Left ventricle myocardium inferior (tissue), 1 donor: ENCODE measurements at regions of chr10 and their contacts with region 1.

Region 1: DNA sequence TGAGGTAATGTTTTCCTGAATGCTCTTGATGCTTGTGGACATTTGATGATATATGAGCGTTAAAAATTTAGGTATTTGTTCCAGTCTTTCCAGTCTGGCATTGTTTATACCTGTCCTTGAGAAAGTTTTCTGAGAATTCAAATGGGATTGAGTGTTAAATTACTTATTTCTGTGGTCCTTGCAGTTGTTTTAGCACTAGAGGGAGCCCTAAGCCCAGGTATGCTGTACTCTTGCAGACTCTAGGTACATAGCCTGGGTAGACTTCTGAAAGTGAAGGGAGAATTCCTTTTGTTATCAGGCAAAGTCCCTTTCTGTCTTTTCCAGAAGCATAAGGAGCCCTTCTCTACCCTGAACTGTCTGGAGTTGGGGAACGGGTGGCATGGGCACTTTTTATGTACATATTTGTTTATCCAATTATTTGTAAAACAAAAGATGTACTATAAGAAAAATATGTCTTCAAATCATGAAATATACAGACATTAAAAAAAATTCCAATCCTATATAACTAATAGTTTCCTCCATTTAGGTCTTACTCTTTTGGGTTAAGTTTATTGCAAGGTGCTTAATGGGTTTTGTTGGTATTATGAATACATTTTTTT is 262.1 kb downstream of the ATRNL1 start:
- DNase-seq: no peak
- H3K4me3 ChIP-seq: no peak overlapping the region
- H3K27ac ChIP-seq: no peak overlapping the region
- H3K4me1 ChIP-seq: no peaks in the 10 kb centered on the region
- H3K27me3 ChIP-seq: no peaks in the 10 kb centered on the region
- CTCF ChIP-seq: peak; percentile 59

Region 2: GRCh38 chr10:116385994-116386809 is 1030.9 kb after region 1 on chr10:
- intact Hi-C with region 1: loop called (anchors 5 kb)
- DNase-seq: no peak
- H3K4me3 ChIP-seq: no peak overlapping the region
- H3K27ac ChIP-seq: no peak overlapping the region
- H3K4me1 ChIP-seq: no peaks in the 10 kb centered on the region
- H3K27me3 ChIP-seq: peaks cover 9% of the 10 kb centered on the region
- CTCF ChIP-seq: peak; percentile 72